Activated naive CD4-positive, alpha-beta T cell treated with anti-CD3 and anti-CD28 coated beads for 36 hours (primary cell): ENCODE measurements at regions of chr21 and their contacts with region 1.

Region 1: GRCh38 chr21:42187976-42188653 is 30.8 kb upstream of the ABCG1 start:
- DNase-seq: peak; percentile 94
- H3K4me3 Mint-ChIP-seq: peak overlapping the region; percentile 60
- H3K27ac Mint-ChIP-seq: peak overlapping the region; percentile 95
- H3K4me1 Mint-ChIP-seq: peaks cover 70% of the 10 kb centered on the region
- H3K27me3 Mint-ChIP-seq: no peaks in the 10 kb centered on the region

Region 2: DNA sequence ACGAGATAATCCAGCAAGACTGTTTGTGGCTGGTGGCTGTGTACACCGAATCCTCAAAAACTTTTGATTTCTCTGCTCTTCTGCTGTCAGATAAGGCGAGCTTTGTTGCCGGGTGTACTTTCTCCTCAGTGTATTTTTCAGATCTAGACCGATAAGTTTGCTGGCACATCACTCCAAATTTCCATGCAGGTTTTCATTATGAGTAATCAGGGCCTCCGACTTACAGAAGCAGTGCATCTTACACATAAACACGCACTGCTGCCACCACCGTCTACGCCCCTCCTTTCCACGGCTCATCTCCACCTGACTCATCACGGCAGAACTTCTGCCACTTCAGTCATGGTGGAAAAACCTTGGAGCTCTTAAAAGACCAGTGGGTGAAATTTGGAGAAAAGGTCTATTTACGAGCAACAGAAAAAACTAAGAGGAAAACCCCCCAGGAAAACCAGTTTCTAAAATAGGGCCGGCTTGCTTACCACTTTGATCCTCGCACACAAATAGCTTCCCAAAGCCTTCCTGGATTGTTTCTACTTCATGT is 185.6 kb before region 1 on chr21:
- CTCF ChIA-PET with region 1: no interaction called
- intact Hi-C with region 1: loop called (anchors 1 kb)
- DNase-seq: peak; percentile 89
- H3K4me3 Mint-ChIP-seq: peak overlapping the region; percentile 27
- H3K27ac Mint-ChIP-seq: peak overlapping the region; percentile 86
- H3K4me1 Mint-ChIP-seq: peaks cover 62% of the 10 kb centered on the region
- H3K27me3 Mint-ChIP-seq: no peaks in the 10 kb centered on the region

Region 3: DNA sequence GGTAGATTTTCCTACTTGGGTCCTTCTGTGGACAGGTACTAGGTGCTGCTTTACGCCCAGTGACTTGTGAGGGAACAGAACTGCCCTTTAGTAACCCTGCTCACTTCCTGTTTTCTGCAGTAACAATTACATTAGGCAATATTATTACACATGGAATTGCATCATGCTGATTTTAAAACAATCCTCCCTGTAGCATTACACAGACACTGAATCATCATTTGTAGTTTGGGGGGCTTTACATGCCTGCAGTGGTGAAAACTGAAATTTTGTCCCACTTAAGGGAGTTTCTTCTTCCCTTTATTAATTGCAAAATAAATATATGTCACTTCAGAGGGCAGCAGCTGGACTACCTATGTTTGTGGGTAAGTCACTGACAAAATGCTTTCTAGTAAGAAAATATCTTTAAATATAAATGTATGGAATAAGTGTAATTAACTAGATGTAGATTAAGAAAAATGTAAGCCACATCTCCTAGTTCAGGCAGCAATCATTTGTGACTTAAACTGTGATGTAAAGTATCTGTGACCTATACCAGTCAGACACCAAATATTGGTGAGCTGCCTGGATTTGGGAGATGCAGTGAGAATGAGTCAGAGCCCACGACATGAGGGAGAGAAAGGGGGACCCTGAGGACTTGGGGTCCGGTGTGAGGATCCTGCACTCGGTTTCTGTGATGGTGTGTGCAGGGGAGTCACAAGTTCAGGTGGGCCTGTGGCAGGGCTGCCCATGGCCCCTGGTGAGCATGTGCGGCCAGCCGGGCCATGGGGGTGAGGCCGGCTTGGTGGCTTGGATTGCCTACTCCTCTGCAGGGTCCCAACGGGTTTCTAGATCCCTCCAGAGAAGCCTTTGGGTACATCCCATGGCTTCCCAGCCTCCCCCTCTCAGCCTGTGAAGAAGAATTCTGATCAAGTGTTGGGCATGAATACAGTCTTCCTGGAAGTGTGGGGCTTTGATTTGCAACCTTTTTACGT is 11.7 kb after region 1 on chr21:
- CTCF ChIA-PET with region 1: interaction called, 5 read pairs
- intact Hi-C with region 1: loop called (anchors 1 kb)
- DNase-seq: peak; percentile 43
- H3K4me3 Mint-ChIP-seq: no peak overlapping the region
- H3K27ac Mint-ChIP-seq: peak overlapping the region; percentile 79
- H3K4me1 Mint-ChIP-seq: peaks cover 49% of the 10 kb centered on the region
- H3K27me3 Mint-ChIP-seq: no peaks in the 10 kb centered on the region

Region 4: DNA sequence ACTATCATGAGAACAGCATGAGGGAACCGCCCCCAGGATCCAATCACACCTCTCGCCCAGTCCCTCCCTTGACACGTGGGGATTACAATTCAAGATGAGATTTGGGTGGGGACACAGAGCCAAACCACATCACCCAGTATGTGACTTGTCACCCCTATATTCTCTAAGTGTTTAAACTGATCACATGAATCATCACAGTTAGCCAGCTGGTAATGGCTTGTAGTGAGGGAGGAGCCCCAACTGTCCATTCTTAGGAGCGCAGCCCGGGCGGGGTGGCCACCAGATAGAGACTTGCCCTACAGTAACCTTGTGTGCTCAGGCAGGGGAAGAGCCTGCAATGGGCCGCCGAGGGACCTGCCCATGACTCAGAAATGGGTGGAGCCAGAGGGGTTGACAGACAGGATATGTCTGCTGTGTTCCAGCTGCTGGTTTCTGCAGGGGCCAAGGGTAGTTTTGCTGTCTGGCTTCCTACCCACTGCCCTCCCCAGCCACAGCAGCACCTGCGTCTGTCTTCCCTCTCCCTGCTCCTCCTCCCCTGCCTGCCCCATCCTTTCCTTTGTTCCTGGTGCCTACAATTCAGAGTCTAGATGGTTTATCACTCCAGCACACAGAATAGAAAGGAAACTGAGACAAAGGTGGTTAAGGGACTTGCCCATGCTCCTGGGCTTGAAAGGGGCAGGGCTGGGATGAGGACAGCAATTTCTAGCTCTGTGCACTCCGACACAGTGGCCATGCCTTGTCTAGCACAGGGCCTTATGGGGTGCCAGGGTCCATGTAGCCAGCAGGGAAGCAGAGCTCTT is 40.0 kb after region 1 on chr21:
- CTCF ChIA-PET with region 1: interaction called, 6 read pairs
- intact Hi-C with region 1: loop called (anchors 1 kb)
- DNase-seq: peak; percentile 98
- H3K4me3 Mint-ChIP-seq: peak overlapping the region; percentile 54
- H3K27ac Mint-ChIP-seq: peak overlapping the region; percentile 89
- H3K4me1 Mint-ChIP-seq: peaks cover 78% of the 10 kb centered on the region
- H3K27me3 Mint-ChIP-seq: no peaks in the 10 kb centered on the region

Region 5: GRCh38 chr21:42238185-42238934 is 50.2 kb after region 1 on chr21:
- CTCF ChIA-PET with region 1: interaction called, 6 read pairs
- intact Hi-C with region 1: loop called (anchors 1 kb)
- DNase-seq: peak; percentile 66
- H3K4me3 Mint-ChIP-seq: peak overlapping the region; percentile 13
- H3K27ac Mint-ChIP-seq: peak overlapping the region; percentile 95
- H3K4me1 Mint-ChIP-seq: peaks cover 53% of the 10 kb centered on the region
- H3K27me3 Mint-ChIP-seq: no peaks in the 10 kb centered on the region